ENCODE measurements at regions of chrX and their contacts with region 1.

Region 1: GRCh38 chrX:41664307-41665299 is 24.2 kb upstream of the GPR34 start:
- DNase-seq: peak; percentile 28
- ATAC-seq: peak; percentile 75
- H3K4me3 Mint-ChIP-seq: no peak overlapping the region
- H3K27ac Mint-ChIP-seq: peak overlapping the region; percentile 37
- H3K4me1 Mint-ChIP-seq: peaks cover 35% of the 10 kb centered on the region
- H3K27me3 Mint-ChIP-seq: no peaks in the 10 kb centered on the region

Region 2: DNA sequence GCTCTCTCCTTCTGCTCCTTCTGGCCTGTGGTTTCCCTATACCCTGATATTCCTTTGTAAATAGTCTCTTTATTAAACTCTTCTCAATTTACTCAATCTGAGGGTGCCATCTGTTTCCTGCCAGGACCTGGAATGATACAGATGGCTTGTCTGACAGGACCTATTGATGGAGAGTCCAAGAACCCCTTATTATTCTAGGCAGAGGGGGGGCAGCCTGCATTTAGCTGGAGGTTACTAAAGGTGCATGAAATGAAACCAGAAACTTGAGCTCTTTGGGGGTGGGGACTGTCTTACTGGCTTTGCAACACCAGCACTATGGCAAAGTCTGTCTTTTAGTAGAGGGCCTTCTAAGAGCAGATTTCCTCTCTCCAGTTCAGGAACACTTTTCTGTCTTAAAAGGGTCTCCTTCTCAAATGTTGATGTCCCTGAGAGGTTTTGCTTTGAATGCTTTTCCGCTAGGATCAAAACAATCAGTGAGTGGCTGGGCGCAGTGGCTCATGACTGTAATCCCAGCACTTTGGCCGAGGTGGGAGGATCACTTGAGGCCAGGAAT is 766.8 kb before region 1 on chrX:
- CTCF ChIA-PET with region 1: no interaction called
- POLR2A ChIA-PET with region 1: no interaction called
- intact Hi-C with region 1: no loop called
- DNase-seq: no peak
- ATAC-seq: no peak
- H3K4me3 Mint-ChIP-seq: no peak overlapping the region
- H3K27ac Mint-ChIP-seq: no peak overlapping the region
- H3K4me1 Mint-ChIP-seq: no peaks in the 10 kb centered on the region
- H3K27me3 Mint-ChIP-seq: peaks cover 4% of the 10 kb centered on the region

Region 3: GRCh38 chrX:41245641-41246040 is 419.0 kb before region 1 on chrX:
- CTCF ChIA-PET with region 1: no interaction called
- POLR2A ChIA-PET with region 1: no interaction called
- intact Hi-C with region 1: no loop called
- DNase-seq: no peak
- ATAC-seq: no peak
- H3K4me3 Mint-ChIP-seq: no peak overlapping the region
- H3K27ac Mint-ChIP-seq: no peak overlapping the region
- H3K4me1 Mint-ChIP-seq: no peaks in the 10 kb centered on the region
- H3K27me3 Mint-ChIP-seq: no peaks in the 10 kb centered on the region

Region 4: DNA sequence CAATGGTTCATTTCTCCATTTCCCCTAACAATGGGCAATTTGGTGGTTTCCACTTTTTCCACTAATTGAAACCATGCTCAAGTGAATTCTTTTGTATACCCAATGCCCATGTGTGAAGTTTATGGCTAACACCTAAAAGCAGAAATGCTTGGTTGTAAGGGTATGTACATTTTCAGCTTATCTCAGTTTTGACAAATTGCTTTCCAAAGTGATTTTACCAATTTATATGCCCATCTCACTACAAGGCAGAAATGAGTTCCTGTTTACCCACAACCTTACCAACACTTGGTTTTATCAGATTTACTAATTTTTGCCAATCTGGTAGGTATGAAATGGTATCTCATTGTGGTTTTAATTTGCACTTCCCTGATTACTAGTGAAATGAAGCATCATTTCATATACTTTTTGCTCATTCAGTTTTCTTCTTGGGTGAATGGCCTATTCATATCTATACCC is 39.0 kb after region 1 on chrX:
- CTCF ChIA-PET with region 1: no interaction called
- POLR2A ChIA-PET with region 1: no interaction called
- intact Hi-C with region 1: loop called in 1 of 2 experiments (anchors 5 kb)
- DNase-seq: no peak
- ATAC-seq: peak; percentile 65
- H3K4me3 Mint-ChIP-seq: no peak overlapping the region
- H3K27ac Mint-ChIP-seq: no peak overlapping the region
- H3K4me1 Mint-ChIP-seq: peaks cover 28% of the 10 kb centered on the region
- H3K27me3 Mint-ChIP-seq: no peaks in the 10 kb centered on the region

Region 5: DNA sequence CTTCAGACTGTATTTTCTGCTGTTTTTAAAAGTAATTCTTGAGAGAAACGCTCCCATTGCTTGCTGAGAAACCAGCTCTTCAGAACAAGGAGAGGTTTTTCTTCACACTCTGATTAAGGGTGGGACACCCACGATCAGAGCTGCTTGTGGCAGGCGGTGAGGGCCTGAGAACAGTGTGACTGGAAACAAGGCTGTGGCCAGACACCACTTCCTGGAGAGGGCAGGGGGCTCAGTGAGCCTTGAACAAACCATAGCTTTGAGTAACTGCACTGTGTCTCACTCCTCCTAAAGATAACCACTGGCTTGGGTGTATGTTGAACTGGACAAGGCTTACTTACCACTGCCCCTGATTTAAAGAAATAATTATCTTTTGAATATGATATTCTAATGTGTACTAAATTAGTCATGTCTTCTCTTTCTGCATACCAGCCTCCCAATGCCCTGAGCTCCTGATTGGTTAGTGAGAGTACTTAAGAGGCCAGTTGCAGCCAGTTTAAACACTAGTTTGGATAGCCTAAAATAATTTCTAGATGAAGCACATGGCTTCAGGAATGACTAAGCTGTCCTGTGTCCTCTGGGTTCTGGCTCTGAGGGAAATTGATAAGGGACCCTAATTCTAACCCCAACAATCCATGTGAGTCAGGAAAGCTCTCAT is 55.6 kb after region 1 on chrX:
- CTCF ChIA-PET with region 1: no interaction called
- POLR2A ChIA-PET with region 1: no interaction called
- intact Hi-C with region 1: loop called in 1 of 2 experiments (anchors 10 kb)
- DNase-seq: peak; percentile 55
- ATAC-seq: peak; percentile 61
- H3K4me3 Mint-ChIP-seq: no peak overlapping the region
- H3K27ac Mint-ChIP-seq: no peak overlapping the region
- H3K4me1 Mint-ChIP-seq: peaks cover 36% of the 10 kb centered on the region
- H3K27me3 Mint-ChIP-seq: no peaks in the 10 kb centered on the region